WTC11 (cell line): ENCODE measurements at regions of chr9 and their contacts with region 1.

Region 1: GRCh38 chr9:136267261-136268111 is 21.9 kb upstream of the QSOX2 start:
- DNase-seq: peak; percentile 84
- ATAC-seq: peak; percentile 91
- H3K4me3 Mint-ChIP-seq: peak overlapping the region; percentile 76
- H3K27ac Mint-ChIP-seq: peak overlapping the region; percentile 79
- H3K4me1 Mint-ChIP-seq: peaks cover 22% of the 10 kb centered on the region
- H3K27me3 Mint-ChIP-seq: no peaks in the 10 kb centered on the region; the same call in 1 of the 2 replicates
- CTCF ChIP-seq: no peak

Region 2: GRCh38 chr9:136255896-136256890 is 11.3 kb before region 1 on chr9:
- CTCF ChIA-PET with region 1: interaction called, 18 read pairs
- POLR2A ChIA-PET with region 1: interaction called, 3 read pairs
- DNase-seq: no peak
- ATAC-seq: peak; percentile 62
- H3K4me3 Mint-ChIP-seq: no peak overlapping the region
- H3K27ac Mint-ChIP-seq: no peak overlapping the region
- H3K4me1 Mint-ChIP-seq: no peaks in the 10 kb centered on the region
- H3K27me3 Mint-ChIP-seq: no peaks in the 10 kb centered on the region
- CTCF ChIP-seq: no peak

Region 3: GRCh38 chr9:136283291-136284235 is 16.1 kb after region 1 on chr9:
- CTCF ChIA-PET with region 1: interaction called, 22 read pairs
- POLR2A ChIA-PET with region 1: no interaction called
- DNase-seq: peak; percentile 89
- ATAC-seq: peak; percentile 96
- H3K4me3 Mint-ChIP-seq: no peak overlapping the region
- H3K27ac Mint-ChIP-seq: no peak overlapping the region
- H3K4me1 Mint-ChIP-seq: peaks cover 7% of the 10 kb centered on the region; the same call in 1 of the 2 replicates
- H3K27me3 Mint-ChIP-seq: no peaks in the 10 kb centered on the region
- CTCF ChIP-seq: peak; percentile 73